Activated T-helper 1 cell treated with anti-CD3 and anti-CD28 coated beads, Interleukin-12 subunit alpha, Interleukin-12 subunit beta, Interleukin-2, Interleukin-4 antibody, amounts not matched to agents 30 ng/mL and 10 ng/mL and 1 ng/mL, durations not matched to agents 14 hours and 24 hours and 36 hours (primary cell): ENCODE measurements at regions of chr10 and their contacts with region 1.

Region 1: GRCh38 chr10:119750391-119751230 is 24.8 kb downstream of the INPP5F start:
- DNase-seq: peak; percentile 39
- H3K4me3 Mint-ChIP-seq: no peak overlapping the region
- H3K27ac Mint-ChIP-seq: no peak overlapping the region
- H3K4me1 Mint-ChIP-seq: peaks cover 7% of the 10 kb centered on the region
- H3K27me3 Mint-ChIP-seq: no peaks in the 10 kb centered on the region

Region 2: GRCh38 chr10:119859420-119860258 is 109.0 kb after region 1 on chr10:
- intact Hi-C with region 1: loop called (anchors 1 kb)
- DNase-seq: no peak
- H3K4me3 Mint-ChIP-seq: no peak overlapping the region
- H3K27ac Mint-ChIP-seq: peak overlapping the region; percentile 35
- H3K4me1 Mint-ChIP-seq: peaks cover 45% of the 10 kb centered on the region
- H3K27me3 Mint-ChIP-seq: no peaks in the 10 kb centered on the region